Activated naive CD4-positive, alpha-beta T cell treated with anti-CD3 and anti-CD28 coated beads for 36 hours (primary cell): ENCODE measurements at regions of chr2 and their contacts with region 1.

Region 1: GRCh38 chr2:204871231-204871953 is 326.1 kb downstream of the PARD3B start:
- DNase-seq: no peak
- H3K4me3 Mint-ChIP-seq: no peak overlapping the region
- H3K27ac Mint-ChIP-seq: no peak overlapping the region
- H3K4me1 Mint-ChIP-seq: peaks cover 31% of the 10 kb centered on the region
- H3K27me3 Mint-ChIP-seq: no peaks in the 10 kb centered on the region

Region 2: DNA sequence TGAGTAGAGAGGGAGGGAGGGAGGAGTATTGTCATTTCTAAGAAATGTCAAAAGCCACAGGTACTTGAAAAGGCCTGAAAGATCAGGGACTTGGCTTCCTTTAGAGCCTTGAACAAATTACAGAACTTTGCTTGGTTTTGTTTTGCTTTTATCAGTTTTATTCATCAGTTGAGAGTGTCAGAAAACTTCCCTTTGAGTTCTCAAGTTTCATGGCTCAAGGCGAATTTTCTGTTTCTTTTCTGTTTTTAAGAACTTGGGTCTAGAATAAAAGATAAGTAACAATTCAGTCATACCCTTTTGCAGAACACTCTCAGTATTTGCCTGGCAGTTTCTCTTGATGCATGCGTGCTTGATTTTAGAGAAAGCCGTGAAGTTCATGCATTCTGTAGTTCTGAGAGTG is 205.8 kb after region 1 on chr2:
- CTCF ChIA-PET with region 1: no interaction called
- intact Hi-C with region 1: loop called (anchors 5 kb)
- DNase-seq: peak; percentile 9
- H3K4me3 Mint-ChIP-seq: peak overlapping the region; percentile 46
- H3K27ac Mint-ChIP-seq: peak overlapping the region; percentile 50
- H3K4me1 Mint-ChIP-seq: peaks cover 53% of the 10 kb centered on the region
- H3K27me3 Mint-ChIP-seq: no peaks in the 10 kb centered on the region

Region 3: GRCh38 chr2:205200454-205200853 is 329.1 kb after region 1 on chr2:
- CTCF ChIA-PET with region 1: interaction called, 3 read pairs
- intact Hi-C with region 1: loop called (anchors 5 kb)
- DNase-seq: no peak
- H3K4me3 Mint-ChIP-seq: no peak overlapping the region
- H3K27ac Mint-ChIP-seq: no peak overlapping the region
- H3K4me1 Mint-ChIP-seq: peaks cover 5% of the 10 kb centered on the region
- H3K27me3 Mint-ChIP-seq: no peaks in the 10 kb centered on the region

Region 4: DNA sequence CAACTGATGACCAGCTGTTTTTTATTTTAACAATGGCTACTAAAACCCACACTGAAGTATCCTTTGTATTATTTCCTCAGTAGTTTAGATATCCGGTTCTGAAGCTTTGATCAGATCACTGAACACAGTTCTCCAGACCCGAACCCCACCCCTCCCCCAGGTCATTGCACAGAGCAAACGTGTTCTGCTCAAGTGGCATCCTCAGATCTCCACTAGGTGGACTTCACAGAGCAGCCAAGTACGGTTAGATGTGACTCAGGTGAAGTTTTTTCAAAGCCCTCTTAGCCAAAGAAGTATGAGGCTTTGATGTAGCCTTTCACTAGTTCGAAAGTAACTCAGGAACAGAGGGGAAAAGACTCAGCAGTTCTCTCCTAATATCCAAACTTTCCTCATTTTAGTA is 668.2 kb after region 1 on chr2:
- CTCF ChIA-PET with region 1: no interaction called
- intact Hi-C with region 1: loop called (anchors 10 kb)
- DNase-seq: no peak
- H3K4me3 Mint-ChIP-seq: no peak overlapping the region
- H3K27ac Mint-ChIP-seq: no peak overlapping the region
- H3K4me1 Mint-ChIP-seq: peaks cover 26% of the 10 kb centered on the region
- H3K27me3 Mint-ChIP-seq: no peaks in the 10 kb centered on the region

Region 5: GRCh38 chr2:205885492-205886099 is 1014.2 kb after region 1 on chr2:
- CTCF ChIA-PET with region 1: no interaction called
- intact Hi-C with region 1: loop called (anchors 1 kb)
- DNase-seq: peak; percentile 86
- H3K4me3 Mint-ChIP-seq: no peak overlapping the region
- H3K27ac Mint-ChIP-seq: no peak overlapping the region
- H3K4me1 Mint-ChIP-seq: no peaks in the 10 kb centered on the region
- H3K27me3 Mint-ChIP-seq: peaks cover 16% of the 10 kb centered on the region